WTC11 (cell line): ENCODE measurements at regions of chr4 and their contacts with region 1.

Region 1: DNA sequence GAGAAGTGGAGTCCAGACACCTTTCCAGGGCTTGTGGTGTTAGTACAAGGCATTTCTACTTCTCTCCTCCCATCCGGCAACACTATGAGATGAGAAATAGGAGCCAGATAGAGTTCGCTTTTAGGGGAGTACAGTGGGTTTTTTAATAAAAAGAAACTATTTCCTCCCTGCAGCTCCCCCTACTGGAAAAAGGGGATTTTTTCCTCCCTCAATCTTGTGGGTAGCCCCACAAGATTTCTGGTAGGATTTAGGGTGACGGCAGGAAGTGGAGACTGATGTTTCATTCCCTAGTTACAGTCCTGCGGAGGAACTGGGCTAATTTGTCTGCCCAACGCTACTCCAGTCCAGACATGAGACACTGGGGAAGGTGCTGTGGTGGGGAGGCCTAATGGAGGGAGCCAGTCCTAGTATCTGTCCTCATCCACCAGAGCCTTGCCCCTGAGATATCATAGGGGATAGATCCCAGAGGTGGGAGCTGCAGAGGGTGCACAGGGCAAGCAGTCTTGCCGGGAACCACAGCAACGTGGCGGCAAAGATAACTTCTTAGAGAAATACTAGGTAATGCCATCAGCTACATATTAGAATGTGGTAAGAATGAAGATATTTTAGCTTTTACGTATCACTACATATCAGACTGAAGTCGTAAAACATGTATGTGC is 45.5 kb upstream of the PRKG2 start:
- DNase-seq: peak; percentile 14
- ATAC-seq: peak; percentile 93
- H3K4me3 Mint-ChIP-seq: no peak overlapping the region
- H3K27ac Mint-ChIP-seq: no peak overlapping the region
- H3K4me1 Mint-ChIP-seq: peaks cover 2% of the 10 kb centered on the region
- H3K27me3 Mint-ChIP-seq: no peaks in the 10 kb centered on the region; the same call in 1 of the 2 replicates
- CTCF ChIP-seq: peak; percentile 40; the same call in 1 of the 2 replicates

Region 2: GRCh38 chr4:81214881-81215868 is 45.4 kb before region 1 on chr4 and contains the start of gene PRKG2:
- CTCF ChIA-PET with region 1: interaction called, 16 read pairs
- POLR2A ChIA-PET with region 1: no interaction called
- DNase-seq: peak; percentile 40
- ATAC-seq: peak; percentile 68
- H3K4me3 Mint-ChIP-seq: peak within 1 kb of the TSS; percentile 77
- H3K27ac Mint-ChIP-seq: no peak within 1 kb of the TSS
- H3K4me1 Mint-ChIP-seq: peaks cover 15% of the 10 kb centered on the region
- H3K27me3 Mint-ChIP-seq: peaks cover 53% of the 10 kb centered on the region
- CTCF ChIP-seq: no peak
- total RNA-seq, gene PRKG2: 1.9 to 3.6 TPM (median 2.7 TPM) in 3 replicates

Region 3: GRCh38 chr4:81314196-81314896 is 53.8 kb after region 1 on chr4:
- CTCF ChIA-PET with region 1: no interaction called
- POLR2A ChIA-PET with region 1: no interaction called
- DNase-seq: no peak
- ATAC-seq: no peak
- H3K4me3 Mint-ChIP-seq: no peak overlapping the region
- H3K27ac Mint-ChIP-seq: no peak overlapping the region
- H3K4me1 Mint-ChIP-seq: no peaks in the 10 kb centered on the region
- H3K27me3 Mint-ChIP-seq: no peaks in the 10 kb centered on the region; the same call in 1 of the 2 replicates
- CTCF ChIP-seq: no peak

Region 4: GRCh38 chr4:81343046-81343445 is 82.5 kb after region 1 on chr4:
- CTCF ChIA-PET with region 1: no interaction called
- POLR2A ChIA-PET with region 1: no interaction called
- DNase-seq: no peak
- ATAC-seq: no peak
- H3K4me3 Mint-ChIP-seq: no peak overlapping the region
- H3K27ac Mint-ChIP-seq: no peak overlapping the region
- H3K4me1 Mint-ChIP-seq: peaks cover 7% of the 10 kb centered on the region
- H3K27me3 Mint-ChIP-seq: no peaks in the 10 kb centered on the region
- CTCF ChIP-seq: no peak